ENCODE measurements at regions of chr11 and their contacts with region 1.

Region 1: DNA sequence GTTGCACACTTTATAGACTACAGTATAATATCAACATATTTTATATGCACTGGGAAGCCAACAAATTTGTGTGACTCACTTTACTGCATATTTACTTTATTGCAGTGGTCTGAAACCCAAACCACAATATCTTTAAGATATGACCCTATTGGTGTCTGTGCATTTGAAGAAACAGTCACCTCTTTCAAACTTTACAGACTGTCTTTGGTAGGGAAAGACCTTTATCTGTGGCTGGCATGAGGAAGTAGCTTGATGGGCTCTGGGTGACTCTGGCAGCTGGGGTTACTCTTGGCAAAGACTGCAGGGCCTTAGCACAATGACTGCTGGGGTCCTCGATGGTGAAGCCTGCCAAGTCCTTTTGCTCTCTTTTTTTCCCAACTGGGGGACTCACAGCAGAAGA is 21.3 kb upstream of the ABTB2 start:
- DNase-seq: no peak
- ATAC-seq: peak; percentile 32; the same call in 1 of the 2 replicates
- H3K4me3 ChIP-seq: no peak overlapping the region
- H3K27ac ChIP-seq: no peak overlapping the region
- H3K4me1 ChIP-seq: peaks cover 0 to 7% of the 10 kb centered on the region in 2 experiments; a peak in 2 of 4 replicates
- H3K27me3 ChIP-seq: no peaks in the 10 kb centered on the region
- CTCF ChIP-seq: no peak
- POLR2A ChIP-seq: no peak
- RAD21 ChIP-seq: no peak

Region 2: DNA sequence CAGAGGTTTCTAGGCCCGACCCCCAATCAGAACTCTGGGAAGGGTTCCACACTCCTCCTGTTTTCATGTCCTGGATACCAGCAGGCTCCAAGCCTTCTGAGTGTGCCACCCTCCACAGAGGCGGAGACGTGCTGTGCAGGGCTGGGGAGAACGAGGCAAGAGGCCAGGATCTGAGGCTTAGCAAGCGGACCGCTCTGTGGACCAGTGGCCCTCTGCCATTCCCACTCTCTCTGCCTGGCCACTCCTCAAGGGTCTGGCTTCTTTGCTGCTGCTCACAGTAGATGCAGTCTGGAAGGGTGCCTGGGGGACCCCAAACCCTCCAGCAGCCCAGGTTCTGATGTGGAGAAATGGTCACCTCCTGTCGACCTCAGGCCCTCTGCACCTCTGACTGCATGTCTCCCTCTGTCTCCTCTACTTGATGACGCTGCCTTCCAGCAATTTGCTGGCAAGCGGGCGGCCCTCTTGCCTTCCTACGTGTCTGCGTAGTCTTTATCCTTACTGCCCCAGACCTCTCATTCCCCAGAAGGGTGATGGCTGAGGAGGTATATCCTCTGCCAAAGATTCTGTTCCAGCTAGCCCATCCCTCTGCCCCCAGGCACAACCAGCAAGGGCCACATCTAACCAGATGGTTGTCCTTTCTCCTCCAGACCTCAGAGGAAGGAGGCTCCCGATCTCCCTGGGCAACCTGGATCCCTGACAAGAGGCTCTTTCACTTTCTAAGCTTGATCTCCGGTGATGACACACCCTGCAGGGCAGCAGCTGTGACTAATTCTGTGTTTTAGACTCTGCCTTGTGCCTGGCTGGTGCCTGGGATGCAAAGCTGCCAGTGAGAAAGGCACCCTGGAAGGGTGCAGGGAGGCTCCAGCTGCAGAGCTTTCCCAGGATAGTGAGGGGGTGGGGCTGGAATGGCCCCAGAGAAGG is 186.3 kb before region 1 on chr11:
- CTCF ChIA-PET with region 1: no interaction called
- POLR2A ChIA-PET with region 1: no interaction called
- RAD21 ChIA-PET with region 1: no interaction called
- intact Hi-C with region 1: no loop called
- DNase-seq: peak; percentile 60
- ATAC-seq: peak; percentile 87
- H3K4me3 ChIP-seq: peak overlapping the region in 1 of 2 experiments; percentile 26; a peak in 1 of 4 replicates
- H3K27ac ChIP-seq: 0 out of 2 replicates have a peak overlapping the region, but pooled peaks have one; percentile 1
- H3K4me1 ChIP-seq: peaks cover 19 to 42% of the 10 kb centered on the region in 2 experiments
- H3K27me3 ChIP-seq: no peaks in the 10 kb centered on the region
- CTCF ChIP-seq: no peak
- POLR2A ChIP-seq: no peak
- RAD21 ChIP-seq: no peak

Region 3: DNA sequence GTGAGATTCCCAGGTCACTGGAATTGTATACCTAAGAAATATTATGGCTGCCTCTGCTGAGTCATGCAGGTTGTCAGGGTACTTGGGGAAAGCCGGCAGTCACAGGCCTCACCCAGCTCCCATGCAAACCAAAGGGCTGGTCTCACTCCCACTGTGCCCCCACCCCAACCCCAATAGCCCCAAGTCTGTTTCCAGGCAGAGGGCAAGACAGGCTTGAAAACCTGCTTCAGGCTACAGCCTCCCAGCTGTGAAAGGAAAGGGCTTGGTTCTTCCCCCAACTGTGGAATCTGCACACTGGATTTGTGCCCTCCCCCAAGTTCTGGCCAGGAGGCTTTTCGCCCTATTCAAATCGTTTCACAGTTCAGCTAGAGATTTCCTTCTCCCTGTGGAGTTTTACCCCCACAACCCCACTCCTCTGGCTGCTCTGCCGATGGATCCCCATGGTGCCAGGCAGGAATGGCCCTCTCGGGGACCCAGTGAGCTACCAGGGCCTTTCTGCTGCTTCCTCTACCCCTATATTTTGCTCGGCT is 15.8 kb after region 1 on chr11:
- CTCF ChIA-PET with region 1: no interaction called
- POLR2A ChIA-PET with region 1: no interaction called
- RAD21 ChIA-PET with region 1: no interaction called
- intact Hi-C with region 1: no loop called
- DNase-seq: no peak
- ATAC-seq: no peak
- H3K4me3 ChIP-seq: no peak overlapping the region
- H3K27ac ChIP-seq: no peak overlapping the region
- H3K4me1 ChIP-seq: no peaks in the 10 kb centered on the region
- H3K27me3 ChIP-seq: no peaks in the 10 kb centered on the region
- CTCF ChIP-seq: no peak
- POLR2A ChIP-seq: no peak
- RAD21 ChIP-seq: no peak

Region 4: GRCh38 chr11:34457607-34458006 is 78.5 kb after region 1 on chr11:
- CTCF ChIA-PET with region 1: no interaction called
- POLR2A ChIA-PET with region 1: no interaction called
- RAD21 ChIA-PET with region 1: interaction called in 1 of 2 experiments, 13 read pairs
- intact Hi-C with region 1: no loop called
- DNase-seq: no peak
- ATAC-seq: no peak
- H3K4me3 ChIP-seq: no peak overlapping the region
- H3K27ac ChIP-seq: no peak overlapping the region
- H3K4me1 ChIP-seq: no peaks in the 10 kb centered on the region
- H3K27me3 ChIP-seq: no peaks in the 10 kb centered on the region
- CTCF ChIP-seq: no peak
- POLR2A ChIP-seq: no peak
- RAD21 ChIP-seq: no peak